Mammary epithelial cell (primary cell): ENCODE measurements at regions of chr11 and their contacts with region 1.

Region 1: GRCh38 chr11:67428052-67428914 is at the start of gene RPS6KB2:
- DNase-seq: peak; percentile 95
- H3K4me3 ChIP-seq: peak within 1 kb of the TSS; percentile 62 to 72 (median 71)
- H3K27ac ChIP-seq: peak within 1 kb of the TSS; percentile 58
- H3K4me1 ChIP-seq: peaks cover 12% of the 10 kb centered on the region
- H3K27me3 ChIP-seq: no peaks in the 10 kb centered on the region
- CTCF ChIP-seq: no peak
- total RNA-seq, gene RPS6KB2: 35.7 to 62.3 TPM

Region 2: GRCh38 chr11:67178878-67179277 is 249.4 kb before region 1 on chr11:
- CTCF ChIA-PET with region 1: no interaction called
- dilution Hi-C with region 1: no loop called
- in situ Hi-C with region 1: no loop called
- intact Hi-C with region 1: no loop called
- DNase-seq: no peak
- H3K4me3 ChIP-seq: no peak overlapping the region
- H3K27ac ChIP-seq: no peak overlapping the region
- H3K4me1 ChIP-seq: no peaks in the 10 kb centered on the region
- H3K27me3 ChIP-seq: no peaks in the 10 kb centered on the region
- CTCF ChIP-seq: no peak

Region 3: GRCh38 chr11:67252831-67253239 is 175.4 kb before region 1 on chr11:
- CTCF ChIA-PET with region 1: no interaction called
- dilution Hi-C with region 1: no loop called
- in situ Hi-C with region 1: no loop called
- intact Hi-C with region 1: no loop called
- DNase-seq: peak; percentile 49
- H3K4me3 ChIP-seq: no peak overlapping the region
- H3K27ac ChIP-seq: peak overlapping the region; percentile 34
- H3K4me1 ChIP-seq: peaks cover 32% of the 10 kb centered on the region
- H3K27me3 ChIP-seq: no peaks in the 10 kb centered on the region
- CTCF ChIP-seq: peak; percentile 70 to 80

Region 4: DNA sequence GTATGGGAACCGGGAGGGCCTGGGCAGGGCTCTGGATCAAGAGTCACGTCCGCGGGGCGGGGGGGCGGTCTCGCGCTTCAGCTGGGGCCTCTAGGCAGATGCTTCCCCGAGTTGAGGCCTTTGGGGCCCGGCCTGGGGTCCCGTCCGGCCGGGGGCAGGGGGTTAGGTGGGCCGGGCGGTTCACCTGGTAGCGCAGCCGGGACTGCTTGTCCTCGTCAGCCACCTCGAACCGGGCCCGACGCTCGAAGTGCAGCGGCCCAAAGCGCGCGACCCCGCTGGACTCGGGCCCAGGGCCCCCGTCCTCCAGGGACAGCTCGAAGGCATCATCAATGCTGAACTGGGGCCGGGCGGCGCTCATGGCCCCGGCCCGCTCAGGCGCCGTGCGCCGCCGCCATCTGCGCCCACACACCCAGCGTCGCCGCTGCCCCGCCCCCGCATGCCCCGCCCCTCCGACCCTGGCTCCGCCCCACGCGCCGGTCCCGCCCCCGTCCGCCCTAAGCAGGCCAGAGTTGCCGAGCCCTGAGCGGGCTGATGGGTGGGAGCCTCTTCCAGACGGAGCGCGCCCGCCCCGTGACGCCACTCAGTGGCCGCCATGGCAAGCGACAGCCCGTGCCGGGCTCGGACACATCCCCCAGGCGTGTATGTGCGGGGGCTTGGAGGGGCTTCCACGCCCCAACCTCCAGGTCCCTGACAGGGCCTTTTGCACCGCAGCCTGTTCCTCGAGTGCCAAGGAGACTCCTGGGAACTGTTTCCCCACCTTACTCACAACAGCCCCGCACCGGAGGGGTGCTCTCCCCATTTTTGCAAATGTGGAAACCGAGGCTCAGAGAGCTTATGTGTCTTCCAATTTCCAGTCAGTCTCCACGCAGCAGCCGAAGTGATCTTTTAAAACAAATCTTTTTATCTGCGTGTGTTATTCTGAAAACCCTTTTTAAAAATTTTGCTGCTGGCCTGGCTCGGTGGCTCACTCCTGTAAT is 40.8 kb after region 1 on chr11 and contains the start of gene TMEM134:
- CTCF ChIA-PET with region 1: no interaction called
- dilution Hi-C with region 1: no loop called
- in situ Hi-C with region 1: no loop called
- intact Hi-C with region 1: loop called (anchors 1 kb)
- DNase-seq: peak; percentile 80
- H3K4me3 ChIP-seq: peak within 1 kb of the TSS; percentile 86 to 95 (median 92)
- H3K27ac ChIP-seq: peak within 1 kb of the TSS; percentile 71
- H3K4me1 ChIP-seq: peaks cover 20% of the 10 kb centered on the region
- H3K27me3 ChIP-seq: no peaks in the 10 kb centered on the region
- CTCF ChIP-seq: peak; percentile 24 to 53
- total RNA-seq, gene TMEM134: 55.3 to 69.4 TPM